IMR-90 (cell line): ENCODE measurements at regions of chr18 and their contacts with region 1.

Region 1: DNA sequence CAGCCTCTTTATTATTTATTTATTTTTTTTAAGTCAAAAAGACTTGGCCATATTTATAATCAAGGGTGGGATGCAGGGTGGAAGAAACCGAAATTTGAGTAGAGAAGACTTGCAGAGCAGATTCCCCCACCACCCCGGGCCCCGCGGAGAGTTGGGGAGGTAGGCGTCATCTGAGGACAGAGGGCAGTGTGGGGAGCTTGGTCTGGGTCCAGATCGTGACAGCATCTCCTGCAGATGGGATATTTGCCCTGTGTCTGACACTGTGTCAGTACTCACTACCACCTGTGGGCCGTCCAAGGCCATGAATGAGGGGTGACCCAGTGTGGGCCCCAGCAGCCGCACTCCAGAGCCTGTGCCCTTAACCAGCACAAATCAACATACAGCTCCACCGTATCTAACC is 10.5 kb upstream of the PRELID3A start:
- DNase-seq: no peak
- ATAC-seq: no peak
- H3K4me3 ChIP-seq: no peak overlapping the region
- H3K27ac ChIP-seq: no peak overlapping the region
- H3K4me1 ChIP-seq: no peaks in the 10 kb centered on the region
- H3K27me3 ChIP-seq: peaks cover 3% of the 10 kb centered on the region; the same call in 1 of the 2 replicates
- CTCF ChIP-seq: no peak
- POLR2A ChIP-seq: no peak
- RAD21 ChIP-seq: no peak

Region 2: DNA sequence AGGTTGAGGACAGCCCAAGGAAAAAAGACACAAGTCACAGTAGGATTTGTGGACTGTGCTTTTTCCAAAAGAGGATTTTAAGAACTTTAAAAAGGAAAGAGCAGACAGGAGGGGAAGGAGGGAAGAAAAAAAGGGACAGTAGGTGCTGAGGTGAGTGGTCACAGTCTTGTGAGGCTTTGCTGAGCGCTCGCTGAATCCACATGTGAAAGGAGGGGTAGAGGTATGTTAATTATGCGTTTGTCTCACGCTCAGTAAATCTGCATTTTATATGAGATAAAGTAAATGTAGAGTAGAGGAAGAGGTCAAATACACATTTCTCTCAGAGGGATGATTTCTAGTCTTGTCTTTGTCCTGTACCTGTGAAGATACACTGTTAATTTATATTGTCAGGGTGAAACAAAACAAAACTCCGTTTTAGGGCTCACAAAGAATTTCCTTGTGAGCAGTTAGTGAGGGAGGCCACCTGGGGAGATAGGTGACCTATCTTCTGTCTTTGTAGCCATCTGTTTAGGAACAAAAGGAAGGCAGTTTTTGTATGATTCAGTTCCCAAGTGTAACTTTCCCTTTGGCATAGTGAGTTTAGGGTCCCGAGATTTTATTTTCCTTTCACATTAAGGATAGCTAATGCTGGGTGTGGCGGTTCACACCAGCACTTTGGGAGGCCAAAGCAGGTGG is 682.9 kb before region 1 on chr18:
- CTCF ChIA-PET with region 1: no interaction called
- POLR2A ChIA-PET with region 1: no interaction called
- dilution Hi-C with region 1: no loop called
- in situ Hi-C with region 1: no loop called
- intact Hi-C with region 1: no loop called
- DNase-seq: no peak
- ATAC-seq: no peak
- H3K4me3 ChIP-seq: no peak overlapping the region; the same call in 1 of the 2 replicates
- H3K27ac ChIP-seq: no peak overlapping the region
- H3K4me1 ChIP-seq: no peaks in the 10 kb centered on the region
- H3K27me3 ChIP-seq: peaks cover 16% of the 10 kb centered on the region
- CTCF ChIP-seq: no peak
- POLR2A ChIP-seq: no peak
- RAD21 ChIP-seq: no peak

Region 3: DNA sequence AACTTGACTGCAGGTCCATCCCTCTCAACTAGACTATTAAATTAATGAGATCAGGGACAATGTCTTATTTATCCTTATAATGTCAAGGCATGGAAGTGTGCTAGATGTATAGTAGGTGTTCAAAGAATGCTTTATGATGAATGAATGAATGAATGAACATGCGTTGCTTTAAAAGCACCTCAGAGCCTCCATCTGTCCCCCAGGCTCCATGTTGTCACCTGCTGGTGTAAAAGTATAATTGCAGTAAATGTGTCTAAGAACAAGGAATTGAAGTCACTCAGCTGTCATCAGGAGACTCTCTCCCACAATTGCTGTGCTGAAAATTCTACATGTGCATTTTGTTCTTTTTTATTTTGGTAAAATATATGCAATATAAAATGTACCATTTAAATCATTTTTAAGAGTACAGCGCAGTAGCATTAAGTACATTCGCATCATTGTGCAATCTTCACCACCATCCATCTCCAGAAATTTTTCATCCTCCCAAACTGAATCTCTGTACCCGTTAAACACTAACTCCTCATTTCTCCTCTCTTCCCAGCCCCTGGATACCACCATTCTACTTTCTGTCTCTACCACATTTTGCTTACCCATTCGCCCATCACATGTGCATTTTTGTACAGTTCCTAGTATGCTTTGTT is 655.6 kb before region 1 on chr18:
- CTCF ChIA-PET with region 1: no interaction called
- POLR2A ChIA-PET with region 1: no interaction called
- dilution Hi-C with region 1: no loop called
- in situ Hi-C with region 1: no loop called
- intact Hi-C with region 1: no loop called
- DNase-seq: no peak
- ATAC-seq: no peak
- H3K4me3 ChIP-seq: no peak overlapping the region
- H3K27ac ChIP-seq: no peak overlapping the region
- H3K4me1 ChIP-seq: no peaks in the 10 kb centered on the region
- H3K27me3 ChIP-seq: peaks cover 57% of the 10 kb centered on the region
- CTCF ChIP-seq: peak; percentile 18; the same call in 1 of the 2 replicates
- POLR2A ChIP-seq: no peak
- RAD21 ChIP-seq: no peak

Region 4: GRCh38 chr18:12162786-12163185 is 234.5 kb before region 1 on chr18:
- CTCF ChIA-PET with region 1: no interaction called
- POLR2A ChIA-PET with region 1: no interaction called
- dilution Hi-C with region 1: no loop called
- in situ Hi-C with region 1: no loop called
- intact Hi-C with region 1: no loop called
- DNase-seq: no peak
- ATAC-seq: no peak
- H3K4me3 ChIP-seq: no peak overlapping the region
- H3K27ac ChIP-seq: no peak overlapping the region
- H3K4me1 ChIP-seq: no peaks in the 10 kb centered on the region
- H3K27me3 ChIP-seq: peaks cover 3% of the 10 kb centered on the region; the same call in 1 of the 2 replicates
- CTCF ChIP-seq: no peak
- POLR2A ChIP-seq: no peak
- RAD21 ChIP-seq: no peak

Region 5: DNA sequence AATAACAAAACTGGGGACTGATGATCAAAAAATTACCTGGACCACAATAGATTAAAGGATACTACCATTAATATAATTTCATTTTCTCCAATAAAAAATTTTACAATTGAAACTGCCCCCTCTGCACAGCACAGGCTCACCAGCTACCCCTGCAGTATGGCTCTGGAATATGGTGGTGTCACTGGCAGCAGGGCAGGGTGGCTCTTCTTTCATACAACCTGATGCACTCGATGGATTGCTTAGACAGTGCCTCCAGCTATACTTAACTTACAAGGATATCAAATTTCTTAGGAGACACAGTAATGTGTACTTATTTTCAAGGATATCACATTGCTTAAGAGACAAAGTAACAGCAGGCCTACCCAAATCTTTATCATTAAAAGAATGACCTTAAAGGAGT is 134.5 kb after region 1 on chr18:
- CTCF ChIA-PET with region 1: no interaction called
- POLR2A ChIA-PET with region 1: no interaction called
- dilution Hi-C with region 1: no loop called
- in situ Hi-C with region 1: loop called (anchors 5 kb)
- intact Hi-C with region 1: loop called (anchors 5 kb)
- DNase-seq: peak; percentile 34
- ATAC-seq: peak; percentile 81
- H3K4me3 ChIP-seq: no peak overlapping the region
- H3K27ac ChIP-seq: no peak overlapping the region
- H3K4me1 ChIP-seq: no peaks in the 10 kb centered on the region; the same call in none of the 2 replicates
- H3K27me3 ChIP-seq: no peaks in the 10 kb centered on the region
- CTCF ChIP-seq: no peak
- POLR2A ChIP-seq: no peak
- RAD21 ChIP-seq: no peak